T-cell (primary cell): ENCODE measurements at regions of chr5 and their contacts with region 1.

Region 1: GRCh38 chr5:173809014-173809413 is 79.1 kb upstream of the CPEB4 start:
- DNase-seq: no peak
- ATAC-seq: no peak
- H3K4me3 ChIP-seq: no peak overlapping the region
- H3K4me3 Mint-ChIP-seq: no peak overlapping the region
- H3K27ac ChIP-seq: no peak overlapping the region
- H3K27ac Mint-ChIP-seq: no peak overlapping the region
- H3K4me1 ChIP-seq: no peaks in the 10 kb centered on the region
- H3K4me1 Mint-ChIP-seq: no peaks in the 10 kb centered on the region
- H3K27me3 ChIP-seq: no peaks in the 10 kb centered on the region
- H3K27me3 Mint-ChIP-seq: no peaks in the 10 kb centered on the region

Region 2: GRCh38 chr5:173781814-173782670 is 27.0 kb before region 1 on chr5:
- CTCF ChIA-PET with region 1: no interaction called
- POLR2A ChIA-PET with region 1: no interaction called
- DNase-seq: peak; percentile 35 to 80 (median 63)
- ATAC-seq: peak; percentile 76 to 93 (median 90)
- H3K4me3 ChIP-seq: no peak overlapping the region
- H3K4me3 Mint-ChIP-seq: peak overlapping the region; percentile 2 to 35 (median 22)
- H3K27ac ChIP-seq: peak overlapping the region; percentile 33
- H3K27ac Mint-ChIP-seq: peak overlapping the region; percentile 84 to 95
- H3K4me1 ChIP-seq: peaks cover 3 to 5% of the 10 kb centered on the region in 2 experiments
- H3K4me1 Mint-ChIP-seq: peaks cover 16 to 36% (median 25%) of the 10 kb centered on the region in 3 donors
- H3K27me3 ChIP-seq: no peaks in the 10 kb centered on the region
- H3K27me3 Mint-ChIP-seq: no peaks in the 10 kb centered on the region

Region 3: GRCh38 chr5:173984218-173984617 is 175.2 kb after region 1 on chr5:
- CTCF ChIA-PET with region 1: no interaction called
- POLR2A ChIA-PET with region 1: interaction called in 1 of 2 experiments, 12 read pairs
- DNase-seq: no peak
- ATAC-seq: no peak
- H3K4me3 ChIP-seq: no peak overlapping the region
- H3K4me3 Mint-ChIP-seq: no peak overlapping the region
- H3K27ac ChIP-seq: no peak overlapping the region
- H3K27ac Mint-ChIP-seq: no peak overlapping the region
- H3K4me1 ChIP-seq: no peaks in the 10 kb centered on the region
- H3K4me1 Mint-ChIP-seq: no peaks in the 10 kb centered on the region
- H3K27me3 ChIP-seq: peaks cover 4 to 21% of the 10 kb centered on the region in 2 experiments
- H3K27me3 Mint-ChIP-seq: peaks cover 24 to 44% of the 10 kb centered on the region in 2 donors

Region 4: GRCh38 chr5:175517818-175518450 is 1708.9 kb after region 1 on chr5:
- CTCF ChIA-PET with region 1: no interaction called
- POLR2A ChIA-PET with region 1: no interaction called
- DNase-seq: peak in 5 of 35 experiments; percentile 26 to 56 (median 47)
- ATAC-seq: peak in 3 of 4 experiments; percentile 62 to 67 (median 65)
- H3K4me3 ChIP-seq: no peak overlapping the region
- H3K4me3 Mint-ChIP-seq: peak overlapping the region; percentile 28 to 52 (median 49)
- H3K27ac ChIP-seq: peak overlapping the region; percentile 31
- H3K27ac Mint-ChIP-seq: peak overlapping the region; percentile 95 to 97
- H3K4me1 ChIP-seq: peaks cover 25 to 37% of the 10 kb centered on the region in 2 experiments
- H3K4me1 Mint-ChIP-seq: peaks cover 62 to 78% (median 76%) of the 10 kb centered on the region in 3 donors
- H3K27me3 ChIP-seq: no peaks in the 10 kb centered on the region
- H3K27me3 Mint-ChIP-seq: no peaks in the 10 kb centered on the region